Panc1 (cell line): ENCODE measurements at regions of chr12 and their contacts with region 1.

Region 1: DNA sequence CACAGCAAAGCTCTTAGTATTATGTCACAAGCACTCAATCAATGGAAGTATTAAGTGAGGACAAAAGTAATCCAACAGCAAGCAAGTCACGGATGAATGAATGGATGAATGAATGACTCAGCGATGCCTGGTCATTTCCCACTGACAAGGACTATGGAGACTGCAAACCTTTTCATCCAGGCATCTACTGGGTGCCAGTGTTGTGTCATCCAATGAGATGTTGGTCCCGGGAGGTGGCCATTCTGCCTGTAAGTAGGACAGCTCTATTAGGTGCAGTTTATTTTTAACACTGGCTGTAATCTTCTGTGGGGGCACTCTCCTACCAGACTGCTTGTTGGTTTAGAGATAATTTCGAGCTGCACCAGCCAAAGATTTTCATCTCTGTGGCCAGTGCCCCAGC is 39.4 kb downstream of the STAB2 start:
- DNase-seq: no peak
- ATAC-seq: peak; percentile 90
- H3K4me3 ChIP-seq: no peak overlapping the region
- H3K27ac ChIP-seq: no peak overlapping the region
- H3K4me1 ChIP-seq: no peaks in the 10 kb centered on the region
- H3K27me3 ChIP-seq: no peaks in the 10 kb centered on the region
- CTCF ChIP-seq: peak; percentile 64

Region 2: DNA sequence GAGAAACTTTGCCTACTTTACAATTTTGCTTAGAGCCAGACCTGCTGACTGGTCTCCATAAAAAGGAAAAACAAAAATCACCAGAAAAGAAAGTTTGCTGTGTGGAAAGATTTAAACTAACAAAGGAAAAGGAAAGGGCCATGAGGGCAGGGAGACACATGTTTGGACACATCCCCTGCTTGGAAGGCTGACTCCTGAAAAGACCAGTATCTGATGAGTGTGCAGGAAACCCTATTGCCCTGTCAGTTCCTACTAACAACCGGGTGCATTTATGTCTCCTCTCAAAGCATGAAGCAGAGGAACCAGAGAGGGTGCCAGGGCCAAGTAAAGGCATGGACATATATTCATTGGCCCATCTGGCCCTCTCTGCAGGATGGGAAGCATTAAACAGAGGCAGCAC is 46.5 kb before region 1 on chr12:
- CTCF ChIA-PET with region 1: no interaction called
- POLR2A ChIA-PET with region 1: no interaction called
- in situ Hi-C with region 1: no loop called
- intact Hi-C with region 1: loop called (anchors 5 kb)
- DNase-seq: no peak
- ATAC-seq: no peak
- H3K4me3 ChIP-seq: no peak overlapping the region
- H3K27ac ChIP-seq: no peak overlapping the region
- H3K4me1 ChIP-seq: 0 out of 2 replicates have a peak, but pooled peaks cover 3% of the 10 kb centered on the region
- H3K27me3 ChIP-seq: peaks cover 46% of the 10 kb centered on the region
- CTCF ChIP-seq: no peak